ENCODE measurements at regions of chr3 and their contacts with region 1.

Region 1: DNA sequence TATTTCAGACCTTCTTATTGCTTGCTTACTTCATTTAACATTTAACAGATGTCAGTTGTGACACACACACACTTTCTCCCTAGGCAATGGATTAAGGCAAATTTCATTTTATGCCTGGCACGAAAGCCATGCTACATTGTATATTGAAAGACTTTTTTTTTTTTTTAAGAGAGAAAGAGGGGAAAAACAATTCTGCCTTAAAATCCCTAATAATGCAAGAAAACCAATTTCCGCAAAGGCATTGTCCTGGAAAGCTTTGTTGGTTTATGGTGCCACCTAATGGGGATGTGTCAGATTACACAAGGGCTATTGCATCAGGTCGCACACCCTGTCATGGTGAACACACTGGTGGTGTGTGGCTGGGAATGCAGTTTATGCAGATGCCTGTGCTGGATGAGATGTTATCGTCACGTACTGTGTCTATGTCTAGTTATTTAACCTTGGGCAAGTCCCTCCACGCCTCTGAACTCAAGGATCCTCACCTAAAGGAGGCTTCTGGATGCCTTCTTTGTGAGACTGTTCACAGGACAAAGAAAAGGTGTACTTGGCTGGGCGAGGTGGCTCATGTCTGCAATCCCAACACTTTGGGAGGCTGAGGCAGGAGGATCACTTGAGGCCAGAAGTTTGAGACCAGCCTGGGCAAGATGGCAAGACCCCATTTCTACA is 37.3 kb upstream of the RFTN1 start:
- DNase-seq: peak; percentile 78
- H3K4me3 Mint-ChIP-seq: no peak overlapping the region
- H3K27ac Mint-ChIP-seq: peak overlapping the region; percentile 19
- H3K4me1 Mint-ChIP-seq: peaks cover 5% of the 10 kb centered on the region
- H3K27me3 Mint-ChIP-seq: peaks cover 46% of the 10 kb centered on the region
- CTCF ChIP-seq: peak; percentile 72

Region 2: DNA sequence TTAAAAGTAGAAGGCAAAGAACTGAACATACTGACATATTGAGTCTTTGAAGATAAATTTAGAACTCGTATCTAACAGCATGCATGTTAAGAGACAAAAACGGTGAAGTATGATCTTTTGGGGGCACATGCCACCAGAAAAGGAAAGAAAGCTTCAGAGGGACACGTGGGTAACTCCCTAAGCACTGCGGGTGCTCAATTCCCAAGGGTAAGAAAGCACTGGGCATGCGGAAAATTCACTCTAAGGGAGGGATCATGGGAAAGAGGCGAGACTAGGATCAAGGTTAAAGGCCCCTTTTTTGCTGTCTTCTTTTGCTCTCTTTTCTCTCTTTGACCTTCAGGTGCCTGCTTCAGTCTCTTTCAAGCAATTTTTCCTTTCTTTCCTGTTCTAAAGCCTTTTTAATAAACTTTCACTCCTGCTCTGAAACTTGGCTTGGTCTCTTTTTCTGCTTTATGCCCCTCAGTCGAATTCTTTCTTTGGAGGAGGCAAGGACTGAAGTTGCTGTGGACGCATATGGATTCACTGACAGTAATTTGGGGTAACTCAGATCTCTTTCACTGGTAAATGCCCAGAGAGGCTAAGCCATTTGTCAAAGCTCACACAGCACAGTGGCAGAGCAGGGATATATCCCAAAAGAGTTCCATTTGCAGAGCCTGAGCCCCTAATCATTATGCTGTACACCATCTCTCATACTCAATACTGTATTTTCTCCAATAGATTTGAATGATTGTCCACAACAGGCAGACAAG is 448.8 kb before region 1 on chr3:
- CTCF ChIA-PET with region 1: no interaction called
- intact Hi-C with region 1: no loop called
- DNase-seq: no peak
- H3K4me3 Mint-ChIP-seq: peak overlapping the region; percentile 14
- H3K27ac Mint-ChIP-seq: peak overlapping the region; percentile 97
- H3K4me1 Mint-ChIP-seq: peaks cover 24% of the 10 kb centered on the region
- H3K27me3 Mint-ChIP-seq: no peaks in the 10 kb centered on the region
- CTCF ChIP-seq: no peak

Region 3: DNA sequence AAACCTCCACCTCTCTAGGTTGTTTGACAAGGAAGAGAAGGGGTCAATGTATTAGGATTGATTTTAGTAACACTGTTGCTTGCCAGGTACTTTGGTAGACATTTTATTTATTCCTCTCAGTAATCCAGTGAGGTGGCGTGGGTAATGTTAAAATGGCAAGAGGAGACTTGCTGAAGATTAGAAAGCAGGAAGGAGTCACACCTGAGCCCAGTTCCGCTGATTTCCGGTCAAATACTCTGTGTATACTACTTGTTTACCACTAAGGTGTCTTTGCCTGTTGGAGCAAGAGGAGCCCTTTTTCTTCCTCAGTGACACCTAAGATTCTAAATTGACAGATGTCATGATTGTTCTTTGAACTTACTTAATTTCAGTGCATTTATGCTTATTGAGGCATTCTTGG is 284.1 kb before region 1 on chr3:
- CTCF ChIA-PET with region 1: interaction called, 3 read pairs
- intact Hi-C with region 1: loop called (anchors 2 kb)
- DNase-seq: no peak
- H3K4me3 Mint-ChIP-seq: peak overlapping the region; percentile 14
- H3K27ac Mint-ChIP-seq: no peak overlapping the region
- H3K4me1 Mint-ChIP-seq: peaks cover 16% of the 10 kb centered on the region
- H3K27me3 Mint-ChIP-seq: no peaks in the 10 kb centered on the region
- CTCF ChIP-seq: no peak

Region 4: GRCh38 chr3:16290007-16290826 is 260.6 kb before region 1 on chr3:
- CTCF ChIA-PET with region 1: interaction called, 15 read pairs
- intact Hi-C with region 1: loop called (anchors 1 kb)
- DNase-seq: peak; percentile 30
- H3K4me3 Mint-ChIP-seq: no peak overlapping the region
- H3K27ac Mint-ChIP-seq: no peak overlapping the region
- H3K4me1 Mint-ChIP-seq: no peaks in the 10 kb centered on the region
- H3K27me3 Mint-ChIP-seq: no peaks in the 10 kb centered on the region
- CTCF ChIP-seq: no peak

Region 5: DNA sequence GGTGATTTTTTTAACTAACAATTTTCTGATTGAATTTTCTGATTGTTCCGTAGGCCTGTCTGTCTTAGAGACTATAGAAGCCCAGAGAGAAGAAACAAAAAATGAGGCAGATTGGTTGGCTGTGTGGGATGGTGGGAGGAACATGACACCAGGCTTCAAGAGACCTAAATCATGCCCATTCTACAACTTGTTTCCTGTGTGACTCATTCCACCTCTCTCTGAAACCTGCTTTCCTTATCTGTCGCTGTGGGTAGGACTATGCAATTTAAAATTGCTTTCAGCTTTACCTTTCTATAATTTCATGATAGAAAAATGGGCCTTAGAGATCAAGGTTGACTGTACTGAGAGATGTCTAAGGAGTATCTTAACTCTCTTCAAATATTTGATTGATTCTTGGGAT is 241.3 kb before region 1 on chr3:
- CTCF ChIA-PET with region 1: no interaction called
- intact Hi-C with region 1: loop called (anchors 5 kb)
- DNase-seq: peak; percentile 21
- H3K4me3 Mint-ChIP-seq: no peak overlapping the region
- H3K27ac Mint-ChIP-seq: peak overlapping the region; percentile 33
- H3K4me1 Mint-ChIP-seq: peaks cover 8% of the 10 kb centered on the region
- H3K27me3 Mint-ChIP-seq: no peaks in the 10 kb centered on the region
- CTCF ChIP-seq: no peak

Region 6: DNA sequence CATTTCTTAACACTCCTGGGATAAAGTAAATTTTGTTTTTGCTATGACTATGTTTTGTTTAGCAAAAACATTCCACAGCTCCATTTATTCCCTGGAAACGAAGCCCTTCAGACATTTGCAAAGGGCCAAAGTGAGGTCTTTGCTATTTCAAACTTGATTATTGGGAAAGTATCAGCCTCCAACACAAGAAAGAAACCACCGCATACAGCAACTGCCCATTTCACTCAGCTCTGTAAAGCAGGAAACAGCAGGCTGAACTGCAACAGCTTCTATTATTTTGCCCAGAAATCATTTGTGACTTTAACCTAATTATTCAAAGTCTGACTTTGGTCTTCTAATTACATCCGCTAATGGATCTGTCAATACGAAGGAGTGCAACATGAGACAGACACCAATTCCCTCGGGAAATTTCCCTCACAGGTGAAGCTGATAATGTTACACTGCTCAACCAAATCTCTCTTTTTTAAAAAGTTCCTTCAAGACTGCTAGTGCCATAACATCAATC is 109.4 kb before region 1 on chr3:
- CTCF ChIA-PET with region 1: no interaction called
- intact Hi-C with region 1: no loop called
- DNase-seq: no peak
- H3K4me3 Mint-ChIP-seq: no peak overlapping the region
- H3K27ac Mint-ChIP-seq: no peak overlapping the region
- H3K4me1 Mint-ChIP-seq: no peaks in the 10 kb centered on the region
- H3K27me3 Mint-ChIP-seq: no peaks in the 10 kb centered on the region
- CTCF ChIP-seq: no peak

Measured in Calu3 (cell line).